HepG2 (cell line): ENCODE measurements at regions of chr20 and their contacts with region 1.

Region 1: GRCh38 chr20:58458180-58459057 is 56.8 kb downstream of the APCDD1L start:
- DNase-seq: no peak
- ATAC-seq: no peak
- H3K4me3 ChIP-seq: no peak overlapping the region
- H3K27ac ChIP-seq: no peak overlapping the region
- H3K4me1 ChIP-seq: no peaks in the 10 kb centered on the region
- H3K27me3 ChIP-seq: no peaks in the 10 kb centered on the region
- CTCF ChIP-seq: no peak
- EP300 ChIP-seq: no peak
- POLR2A ChIP-seq: no peak
- RAD21 ChIP-seq: no peak

Region 2: DNA sequence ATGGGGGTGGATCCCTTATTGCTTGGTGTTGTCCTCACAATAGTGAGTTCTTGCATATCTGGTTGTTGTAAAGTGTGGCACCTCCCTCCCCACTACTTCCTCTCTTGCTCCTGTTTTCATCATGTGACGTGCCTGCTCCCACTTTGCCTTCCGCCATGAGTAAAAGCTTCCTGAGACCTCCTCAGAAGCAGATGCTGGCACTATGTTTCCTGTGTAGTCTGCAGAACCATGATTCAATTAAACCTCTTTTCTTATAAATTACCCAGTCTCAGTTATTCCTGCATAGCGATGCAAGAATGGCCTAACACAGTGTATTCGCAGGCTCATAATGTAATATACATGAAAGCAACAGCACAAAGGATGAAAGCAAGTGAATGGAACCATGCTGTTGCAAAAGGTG is 201.6 kb before region 1 on chr20:
- CTCF ChIA-PET with region 1: no interaction called
- POLR2A ChIA-PET with region 1: no interaction called
- in situ Hi-C with region 1: no loop called
- intact Hi-C with region 1: no loop called
- DNase-seq: no peak
- ATAC-seq: no peak
- H3K4me3 ChIP-seq: no peak overlapping the region
- H3K27ac ChIP-seq: no peak overlapping the region
- H3K4me1 ChIP-seq: peaks cover 7% of the 10 kb centered on the region
- H3K27me3 ChIP-seq: no peaks in the 10 kb centered on the region
- CTCF ChIP-seq: no peak
- EP300 ChIP-seq: no peak
- POLR2A ChIP-seq: no peak
- RAD21 ChIP-seq: no peak

Region 3: GRCh38 chr20:58359442-58359841 is 99.0 kb before region 1 on chr20:
- CTCF ChIA-PET with region 1: no interaction called
- POLR2A ChIA-PET with region 1: no interaction called
- in situ Hi-C with region 1: no loop called
- intact Hi-C with region 1: no loop called
- DNase-seq: no peak
- ATAC-seq: no peak
- H3K4me3 ChIP-seq: no peak overlapping the region
- H3K27ac ChIP-seq: no peak overlapping the region
- H3K4me1 ChIP-seq: no peaks in the 10 kb centered on the region
- H3K27me3 ChIP-seq: no peaks in the 10 kb centered on the region
- CTCF ChIP-seq: no peak
- EP300 ChIP-seq: no peak
- POLR2A ChIP-seq: no peak
- RAD21 ChIP-seq: no peak

Region 4: GRCh38 chr20:58494923-58495622 is 36.7 kb after region 1 on chr20:
- CTCF ChIA-PET with region 1: no interaction called
- POLR2A ChIA-PET with region 1: no interaction called
- in situ Hi-C with region 1: no loop called
- intact Hi-C with region 1: loop called (anchors 1 kb)
- DNase-seq: no peak
- ATAC-seq: no peak
- H3K4me3 ChIP-seq: no peak overlapping the region
- H3K27ac ChIP-seq: no peak overlapping the region
- H3K4me1 ChIP-seq: no peaks in the 10 kb centered on the region
- H3K27me3 ChIP-seq: peaks cover 6 to 12% of the 10 kb centered on the region in 2 experiments; a peak in 3 of 5 replicates
- CTCF ChIP-seq: no peak
- EP300 ChIP-seq: no peak
- POLR2A ChIP-seq: no peak
- RAD21 ChIP-seq: no peak